Activated CD8-positive, alpha-beta T cell treated with anti-CD3 and anti-CD28 coated beads for 36 hours (primary cell): ENCODE measurements at regions of chr12 and their contacts with region 1.

Region 1: DNA sequence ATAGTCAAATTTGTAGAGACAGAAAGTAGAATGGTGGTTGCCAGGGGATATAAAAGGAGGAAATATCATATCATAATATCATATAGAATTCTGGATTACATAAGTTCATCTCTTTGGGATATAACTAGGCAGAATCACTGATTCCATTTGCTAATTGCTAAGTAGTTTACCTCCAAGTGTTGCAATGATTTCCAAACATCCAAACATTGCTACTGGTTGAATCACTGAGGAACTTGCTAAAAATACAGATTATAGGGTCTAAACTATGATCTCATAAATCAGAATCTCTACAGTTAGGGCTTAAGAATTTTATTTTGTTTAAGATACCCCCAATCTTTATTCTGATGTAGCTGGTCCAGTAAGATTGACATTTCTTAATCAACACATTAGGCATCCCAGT is 16.1 kb upstream of the TAS2R42 start:
- DNase-seq: no peak
- ATAC-seq: no peak
- H3K4me3 Mint-ChIP-seq: no peak overlapping the region
- H3K27ac Mint-ChIP-seq: no peak overlapping the region
- H3K4me1 Mint-ChIP-seq: no peaks in the 10 kb centered on the region
- H3K27me3 Mint-ChIP-seq: no peaks in the 10 kb centered on the region
- CTCF ChIP-seq: no peak

Region 2: DNA sequence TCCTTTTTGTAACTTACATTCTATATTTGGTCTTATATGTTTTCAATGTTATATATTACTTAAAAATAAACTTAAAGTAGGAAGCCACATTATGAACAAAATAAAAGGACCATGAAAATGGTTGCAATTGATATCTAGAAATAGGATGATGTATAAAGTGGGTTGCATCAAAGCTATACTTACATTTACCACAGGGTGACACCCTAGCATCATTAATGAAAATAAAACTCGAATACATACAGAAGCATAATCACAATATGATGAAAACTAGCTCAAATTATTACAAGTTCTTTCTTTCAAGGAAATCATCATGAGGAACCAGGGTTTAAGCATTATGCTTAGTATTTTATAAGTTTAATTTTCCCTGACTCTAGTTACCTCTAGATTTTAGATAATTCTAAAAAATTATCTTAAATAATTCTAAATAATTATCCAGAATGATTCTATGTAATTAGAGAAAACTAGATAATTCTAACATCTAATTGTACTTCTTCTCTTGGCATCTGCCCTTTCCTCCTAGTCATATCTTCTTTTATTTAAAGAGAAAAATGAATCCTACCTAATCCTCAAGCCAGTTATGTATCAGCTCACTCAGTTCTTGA is 431.6 kb before region 1 on chr12:
- CTCF ChIA-PET with region 1: interaction called, 65 read pairs
- POLR2A ChIA-PET with region 1: no interaction called
- intact Hi-C with region 1: loop called (anchors 5 kb)
- DNase-seq: no peak
- ATAC-seq: peak; percentile 58
- H3K4me3 Mint-ChIP-seq: no peak overlapping the region
- H3K27ac Mint-ChIP-seq: no peak overlapping the region
- H3K4me1 Mint-ChIP-seq: no peaks in the 10 kb centered on the region
- H3K27me3 Mint-ChIP-seq: peaks cover 27% of the 10 kb centered on the region
- CTCF ChIP-seq: peak; percentile 61

Region 3: DNA sequence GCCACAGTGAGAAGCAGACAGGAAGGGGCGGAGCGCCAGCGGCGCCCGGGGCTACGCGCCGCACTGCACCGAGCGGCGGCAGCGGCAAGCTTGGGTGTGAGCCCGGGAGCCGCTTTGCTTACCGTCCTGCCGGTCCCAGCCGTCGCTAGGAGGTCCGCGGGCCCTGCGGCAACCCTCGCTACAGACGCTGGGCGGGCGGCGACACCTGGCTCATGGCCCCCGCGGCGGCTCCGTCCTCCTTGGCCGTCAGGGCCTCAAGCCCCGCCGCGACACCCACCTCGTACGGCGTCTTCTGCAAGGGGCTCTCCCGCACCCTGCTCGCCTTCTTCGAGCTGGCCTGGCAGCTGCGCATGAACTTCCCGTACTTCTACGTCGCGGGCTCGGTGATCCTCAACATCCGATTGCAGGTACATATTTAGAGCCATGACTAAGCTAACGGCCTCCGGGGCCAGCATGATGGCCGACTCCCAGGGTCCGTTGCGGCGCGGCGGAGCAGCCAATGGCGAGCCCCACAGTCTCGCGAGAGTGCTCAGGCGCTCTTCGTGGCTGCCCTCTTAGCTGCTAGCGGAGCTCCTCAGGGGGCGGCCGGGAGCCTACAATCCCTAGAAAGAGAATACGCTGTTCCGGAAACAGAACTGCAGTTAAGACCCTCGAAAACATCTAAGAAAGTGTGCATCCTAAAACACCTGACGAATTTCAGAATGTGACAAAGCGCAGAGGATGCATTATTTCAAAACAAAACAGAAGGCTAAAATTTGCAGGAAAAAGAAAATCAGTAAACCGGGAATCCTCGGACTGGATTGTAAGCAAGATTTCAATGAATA is 31.5 kb before region 1 on chr12 and contains the start of gene SMIM10L1:
- CTCF ChIA-PET with region 1: interaction called, 11 read pairs
- POLR2A ChIA-PET with region 1: no interaction called
- intact Hi-C with region 1: no loop called
- DNase-seq: peak; percentile 95
- ATAC-seq: peak; percentile 98
- H3K4me3 Mint-ChIP-seq: peak within 1 kb of the TSS; percentile 93
- H3K27ac Mint-ChIP-seq: peak within 1 kb of the TSS; percentile 97
- H3K4me1 Mint-ChIP-seq: peaks cover 53% of the 10 kb centered on the region
- H3K27me3 Mint-ChIP-seq: no peaks in the 10 kb centered on the region
- CTCF ChIP-seq: no peak
- total RNA-seq, gene SMIM10L1: 7.9 TPM